Activated CD8-positive, alpha-beta T cell treated with anti-CD3 and anti-CD28 coated beads, Interleukin-2, amount 10 ng/mL, durations not matched to agents 7 days and 5 days (primary cell): ENCODE measurements at regions of chr17 and their contacts with region 1.

Region 1: GRCh38 chr17:76264755-76265596 is at the start of gene UBALD2:
- DNase-seq: peak; percentile 100
- ATAC-seq: peak; percentile 84
- H3K4me3 Mint-ChIP-seq: peak within 1 kb of the TSS; percentile 95
- H3K27ac Mint-ChIP-seq: peak within 1 kb of the TSS; percentile 99
- H3K4me1 Mint-ChIP-seq: peaks cover 58% of the 10 kb centered on the region
- H3K27me3 Mint-ChIP-seq: no peaks in the 10 kb centered on the region
- total RNA-seq, gene UBALD2: 318 to 359 TPM

Region 2: DNA sequence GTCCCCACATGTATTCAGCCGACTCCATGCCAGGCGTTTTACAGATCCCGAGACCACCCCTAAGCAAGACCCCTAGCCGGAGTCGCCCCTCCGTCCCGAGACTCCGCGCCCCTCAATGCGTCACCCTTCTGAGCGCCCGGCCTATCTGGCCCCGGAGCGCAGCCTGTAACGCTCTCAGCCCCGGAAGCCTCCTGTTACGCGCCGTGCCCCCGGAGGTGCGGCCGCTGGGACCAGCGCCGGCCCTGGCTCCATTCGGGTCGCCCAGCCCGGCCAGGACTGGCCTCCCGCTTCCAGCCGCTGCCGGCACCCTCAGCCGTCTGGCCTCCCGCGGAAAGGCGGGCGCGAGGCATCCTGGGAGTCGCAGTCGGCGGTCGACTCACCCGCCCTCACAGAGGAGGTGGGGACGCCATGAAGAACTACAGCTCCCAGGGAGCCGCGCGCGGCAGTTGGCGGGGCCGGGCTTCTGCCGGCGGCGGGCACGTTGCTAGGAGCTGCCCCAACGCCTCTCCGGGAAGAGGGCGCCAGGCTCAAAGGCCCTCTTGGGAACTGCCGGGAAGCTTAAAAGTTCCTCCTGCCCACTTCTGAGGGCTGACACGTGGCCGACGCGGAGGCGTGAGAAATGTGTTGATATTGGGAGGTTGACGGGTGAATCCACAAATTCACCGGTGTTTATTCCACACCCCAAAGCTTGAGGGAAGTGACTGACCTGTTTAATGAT is 324.1 kb before region 1 on chr17 and contains the start of gene FBF1:
- CTCF ChIA-PET with region 1: no interaction called
- POLR2A ChIA-PET with region 1: no interaction called
- DNase-seq: peak; percentile 93
- ATAC-seq: peak; percentile 99
- H3K4me3 Mint-ChIP-seq: peak within 1 kb of the TSS; percentile 85
- H3K27ac Mint-ChIP-seq: peak within 1 kb of the TSS; percentile 83
- H3K4me1 Mint-ChIP-seq: peaks cover 16% of the 10 kb centered on the region
- H3K27me3 Mint-ChIP-seq: no peaks in the 10 kb centered on the region
- total RNA-seq, gene FBF1: 23.4 to 24.5 TPM

Region 3: DNA sequence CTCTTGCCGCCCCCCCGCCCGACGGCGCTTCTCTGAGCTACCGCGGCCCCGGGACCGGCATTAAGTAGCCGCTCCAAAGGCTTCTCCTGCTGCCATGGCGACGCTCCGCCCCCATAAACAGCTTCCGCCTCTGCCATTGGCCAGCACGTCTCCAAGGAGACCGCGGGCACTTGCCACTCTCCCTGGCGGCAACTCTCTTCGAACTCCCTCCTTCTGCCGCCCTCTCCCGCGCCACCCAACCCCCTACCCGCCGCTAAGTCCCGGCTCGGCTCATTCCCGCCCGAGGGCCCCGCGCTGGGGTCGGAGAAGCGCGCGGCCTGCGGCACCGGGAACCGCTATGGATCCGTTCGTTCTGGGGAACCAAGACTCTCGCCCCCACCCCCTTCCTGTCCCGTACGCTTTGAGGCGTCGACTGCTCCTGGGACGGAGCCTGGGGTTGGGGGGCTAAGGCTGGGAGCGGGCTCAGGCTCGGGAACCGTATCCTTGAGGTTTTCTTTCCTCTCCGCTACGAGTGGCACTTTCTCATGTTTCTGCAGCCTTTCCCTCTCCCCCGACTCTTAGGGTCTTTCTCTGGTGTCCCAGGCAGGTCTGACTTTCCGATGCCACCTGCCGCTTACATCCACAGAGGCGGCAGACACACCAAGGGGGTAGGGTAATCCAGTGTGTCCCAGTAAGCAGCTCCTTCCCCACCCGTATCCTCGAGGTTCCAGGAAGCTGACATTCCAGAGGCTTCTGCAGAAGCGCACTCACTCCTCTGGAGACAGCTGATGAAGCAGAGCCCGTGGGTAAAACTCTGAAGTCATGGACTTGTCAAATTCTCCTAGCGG is 123.6 kb before region 1 on chr17 and contains the start of gene FOXJ1:
- CTCF ChIA-PET with region 1: no interaction called
- POLR2A ChIA-PET with region 1: interaction called, 100 read pairs
- DNase-seq: peak; percentile 94
- ATAC-seq: peak; percentile 55
- H3K4me3 Mint-ChIP-seq: peak within 1 kb of the TSS; percentile 76
- H3K27ac Mint-ChIP-seq: peak within 1 kb of the TSS; percentile 97
- H3K4me1 Mint-ChIP-seq: peaks cover 72% of the 10 kb centered on the region
- H3K27me3 Mint-ChIP-seq: no peaks in the 10 kb centered on the region
- total RNA-seq, gene FOXJ1: 8.7 to 9.1 TPM

Region 4: GRCh38 chr17:76166168-76166567 is 98.8 kb before region 1 on chr17:
- CTCF ChIA-PET with region 1: no interaction called
- POLR2A ChIA-PET with region 1: no interaction called
- DNase-seq: no peak
- ATAC-seq: no peak
- H3K4me3 Mint-ChIP-seq: no peak overlapping the region
- H3K27ac Mint-ChIP-seq: peak overlapping the region; percentile 50
- H3K4me1 Mint-ChIP-seq: no peaks in the 10 kb centered on the region
- H3K27me3 Mint-ChIP-seq: no peaks in the 10 kb centered on the region

Region 5: DNA sequence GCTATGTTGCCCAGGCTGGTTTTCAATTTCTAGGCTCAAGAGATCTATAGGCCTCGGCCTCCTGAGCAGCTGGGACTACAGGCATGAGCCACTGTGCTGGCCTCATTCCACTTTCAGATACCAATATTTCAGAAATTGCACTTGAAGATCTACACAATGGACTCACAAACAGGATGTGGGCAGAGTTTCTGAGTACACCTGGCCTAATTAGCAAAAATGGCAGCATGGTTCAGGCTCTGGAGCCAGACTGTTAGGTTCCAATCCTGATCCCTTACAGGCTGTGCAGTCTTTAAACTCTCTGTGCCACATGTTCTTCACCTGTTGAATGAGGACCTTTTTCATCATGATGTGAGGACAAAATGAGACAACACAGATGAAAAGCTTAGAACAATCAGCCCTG is 56.9 kb before region 1 on chr17:
- CTCF ChIA-PET with region 1: interaction called, 6 read pairs
- POLR2A ChIA-PET with region 1: interaction called, 24 read pairs
- DNase-seq: peak; percentile 50
- ATAC-seq: peak; percentile 67
- H3K4me3 Mint-ChIP-seq: peak overlapping the region; percentile 15
- H3K27ac Mint-ChIP-seq: peak overlapping the region; percentile 74
- H3K4me1 Mint-ChIP-seq: peaks cover 75% of the 10 kb centered on the region
- H3K27me3 Mint-ChIP-seq: no peaks in the 10 kb centered on the region

Region 6: GRCh38 chr17:76240461-76241203 is 24.3 kb before region 1 on chr17 and contains the start of gene RNF157:
- CTCF ChIA-PET with region 1: interaction called, 5 read pairs
- POLR2A ChIA-PET with region 1: interaction called, 807 read pairs
- DNase-seq: peak; percentile 66
- ATAC-seq: peak; percentile 90
- H3K4me3 Mint-ChIP-seq: peak within 1 kb of the TSS; percentile 90
- H3K27ac Mint-ChIP-seq: peak within 1 kb of the TSS; percentile 86
- H3K4me1 Mint-ChIP-seq: peaks cover 79% of the 10 kb centered on the region
- H3K27me3 Mint-ChIP-seq: no peaks in the 10 kb centered on the region
- total RNA-seq, gene RNF157: 150 to 165 TPM

Region 7: DNA sequence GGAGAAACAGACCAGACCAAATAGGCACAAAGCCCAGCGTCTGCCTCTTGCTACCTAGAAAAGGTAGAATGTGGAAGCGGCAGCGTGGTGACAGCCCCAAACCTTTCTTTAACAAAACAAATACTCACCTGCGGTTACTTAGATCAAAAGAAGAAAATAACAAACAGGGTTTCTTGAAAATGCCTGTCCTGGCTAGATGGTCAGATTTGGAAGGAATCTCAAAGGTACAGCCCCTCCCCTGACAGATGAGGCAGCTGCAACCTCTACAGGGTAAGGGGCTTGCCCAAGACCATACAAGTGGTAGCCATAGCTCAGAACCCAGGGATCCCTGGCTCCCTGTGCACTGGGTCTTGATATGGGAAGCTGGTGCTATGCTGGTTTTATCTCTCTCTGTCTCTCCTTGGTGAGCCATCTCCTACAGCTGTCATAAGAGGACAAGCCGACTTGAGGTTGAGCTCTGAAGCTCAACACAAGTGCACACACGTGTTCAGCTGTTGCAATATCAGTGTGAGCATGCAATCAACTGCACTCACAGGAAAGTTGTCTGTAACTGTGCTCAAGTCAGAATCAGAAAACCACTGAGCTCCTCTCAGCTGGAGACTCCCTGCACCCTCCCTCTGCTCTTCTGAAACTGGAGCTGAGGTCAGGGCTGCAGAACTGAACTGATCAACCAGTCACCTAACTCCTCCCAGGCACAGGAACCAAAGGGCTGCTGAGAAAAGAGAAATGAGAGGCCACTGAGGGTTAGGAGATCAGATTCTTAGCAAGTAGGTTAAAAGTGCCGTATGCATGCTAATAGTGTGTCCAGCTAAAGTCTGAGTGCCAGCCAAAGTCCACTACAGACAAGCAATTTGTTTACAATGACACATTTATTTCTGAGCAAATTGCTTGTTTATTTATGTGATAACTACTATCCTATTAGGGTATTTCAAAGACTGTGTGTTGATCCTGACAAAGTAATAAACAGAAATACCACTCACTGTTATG is 18.6 kb before region 1 on chr17:
- CTCF ChIA-PET with region 1: interaction called, 25 read pairs
- POLR2A ChIA-PET with region 1: interaction called, 807 read pairs
- DNase-seq: peak; percentile 91
- ATAC-seq: peak; percentile 97
- H3K4me3 Mint-ChIP-seq: peak overlapping the region; percentile 62
- H3K27ac Mint-ChIP-seq: peak overlapping the region; percentile 91
- H3K4me1 Mint-ChIP-seq: peaks cover 84% of the 10 kb centered on the region
- H3K27me3 Mint-ChIP-seq: no peaks in the 10 kb centered on the region

Region 8: DNA sequence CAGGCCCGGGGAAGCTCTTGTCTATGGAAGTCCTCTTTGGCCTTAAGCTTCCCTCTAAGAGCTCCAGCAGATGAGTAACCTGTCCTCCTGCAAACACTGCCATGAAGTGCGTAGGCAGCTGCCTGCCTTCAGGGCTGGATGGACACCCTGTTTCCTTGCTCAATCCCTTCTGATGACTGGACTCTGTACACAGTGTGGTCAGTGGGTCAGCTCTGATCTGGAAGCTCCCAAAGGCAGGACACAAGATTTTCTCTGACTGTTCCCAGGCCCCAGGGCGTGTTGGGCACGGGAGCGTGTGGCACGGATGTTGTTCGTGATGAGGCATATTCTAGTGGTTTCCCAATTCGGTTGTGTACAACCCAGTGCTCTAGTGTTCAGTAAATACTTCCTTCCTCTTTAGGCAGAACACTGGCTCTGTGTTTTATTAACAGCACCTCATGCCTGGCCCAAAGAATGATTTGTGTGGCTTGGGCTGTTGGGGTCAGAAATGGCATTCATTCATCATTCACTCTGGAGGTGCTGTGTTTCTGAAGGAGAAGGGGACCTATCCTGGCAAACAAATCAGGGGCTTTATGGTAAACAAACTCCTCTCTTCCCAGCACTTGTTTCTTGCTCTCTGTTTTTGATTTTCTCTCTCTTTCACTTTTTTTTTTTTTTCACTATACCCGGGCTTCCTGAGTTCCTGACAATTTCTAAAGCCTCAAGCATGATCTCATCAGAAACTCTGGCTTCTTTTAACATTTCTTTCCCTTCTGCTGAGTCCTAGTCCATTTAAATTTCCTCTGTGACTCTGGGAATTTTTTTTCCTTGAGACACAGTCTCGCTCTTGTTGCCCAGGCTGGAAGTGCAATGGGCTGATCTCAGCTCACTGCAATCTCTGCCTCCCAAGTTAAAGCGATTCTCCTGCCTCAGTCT is 12.7 kb before region 1 on chr17:
- CTCF ChIA-PET with region 1: interaction called, 19 read pairs
- POLR2A ChIA-PET with region 1: interaction called, 807 read pairs
- DNase-seq: peak; percentile 65
- ATAC-seq: peak; percentile 72
- H3K4me3 Mint-ChIP-seq: peak overlapping the region; percentile 77
- H3K27ac Mint-ChIP-seq: peak overlapping the region; percentile 96
- H3K4me1 Mint-ChIP-seq: peaks cover 77% of the 10 kb centered on the region
- H3K27me3 Mint-ChIP-seq: no peaks in the 10 kb centered on the region

Region 9: GRCh38 chr17:76397687-76398487 is 132.9 kb after region 1 on chr17:
- CTCF ChIA-PET with region 1: no interaction called
- POLR2A ChIA-PET with region 1: no interaction called
- DNase-seq: peak; percentile 89
- ATAC-seq: peak; percentile 89
- H3K4me3 Mint-ChIP-seq: no peak overlapping the region
- H3K27ac Mint-ChIP-seq: peak overlapping the region; percentile 47
- H3K4me1 Mint-ChIP-seq: no peaks in the 10 kb centered on the region
- H3K27me3 Mint-ChIP-seq: no peaks in the 10 kb centered on the region